GM23248 (cell line): ENCODE measurements at regions of chr20 and their contacts with region 1.

Region 1: GRCh38 chr20:62025832-62026563 is 39.7 kb downstream of the TAF4 start:
- DNase-seq: peak; percentile 90
- H3K4me3 ChIP-seq: peak overlapping the region; percentile 20
- H3K27ac ChIP-seq: peak overlapping the region; percentile 9; the same call in 1 of the 2 replicates
- H3K4me1 ChIP-seq: peaks cover 15% of the 10 kb centered on the region
- H3K27me3 ChIP-seq: no peaks in the 10 kb centered on the region

Region 2: GRCh38 chr20:61765871-61766654 is 259.9 kb before region 1 on chr20:
- in situ Hi-C with region 1: no loop called
- DNase-seq: no peak
- H3K4me3 ChIP-seq: no peak overlapping the region
- H3K27ac ChIP-seq: no peak overlapping the region
- H3K4me1 ChIP-seq: no peaks in the 10 kb centered on the region
- H3K27me3 ChIP-seq: no peaks in the 10 kb centered on the region

Region 3: GRCh38 chr20:62136283-62137091 is 110.5 kb after region 1 on chr20:
- in situ Hi-C with region 1: loop called (anchors 10 kb)
- DNase-seq: peak; percentile 81
- H3K4me3 ChIP-seq: no peak overlapping the region
- H3K27ac ChIP-seq: no peak overlapping the region
- H3K4me1 ChIP-seq: peaks cover 10% of the 10 kb centered on the region; the same call in 1 of the 2 replicates
- H3K27me3 ChIP-seq: no peaks in the 10 kb centered on the region

Region 4: DNA sequence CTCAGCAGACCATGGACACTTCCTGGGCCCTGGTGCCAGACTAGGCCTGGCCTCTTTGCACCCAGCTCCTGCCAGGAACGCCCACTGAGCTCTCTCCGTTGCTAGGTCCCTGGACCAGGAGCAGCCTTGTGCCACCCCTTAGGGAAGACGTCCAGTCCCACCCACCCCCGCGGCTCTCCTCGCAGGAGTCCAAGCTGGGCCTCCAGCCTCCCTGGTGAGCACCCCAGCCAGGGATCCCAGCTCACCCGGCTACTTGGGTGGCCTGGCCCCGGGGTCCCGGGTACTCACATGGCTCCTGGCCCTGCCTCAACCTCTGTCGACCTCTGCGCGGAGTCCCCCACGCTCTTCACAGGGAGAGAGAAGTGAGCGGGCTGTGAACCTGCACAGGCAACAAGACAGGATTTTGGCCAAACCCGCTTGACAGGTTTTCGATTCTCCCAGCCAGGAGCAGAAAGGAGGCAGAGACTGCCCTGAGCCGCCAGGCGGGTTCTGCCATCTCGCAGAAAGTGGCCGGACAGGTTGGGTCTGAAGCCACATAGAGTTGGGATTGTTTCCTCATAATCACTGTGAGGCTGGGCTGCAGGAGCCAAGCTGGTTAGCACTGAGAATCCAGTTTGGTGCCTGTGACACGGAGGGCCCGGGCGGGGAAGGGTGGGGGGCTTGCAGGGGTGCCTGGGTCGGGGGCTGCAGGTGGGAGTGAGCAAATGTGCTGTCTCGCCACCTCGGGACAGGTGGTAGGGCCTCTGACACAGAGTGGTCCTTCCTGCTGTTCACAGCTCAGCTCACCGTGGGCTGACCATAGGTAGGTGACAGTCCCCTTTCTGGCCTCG is 401.4 kb after region 1 on chr20 and contains the start of gene RBBP8NL:
- in situ Hi-C with region 1: no loop called
- DNase-seq: no peak
- H3K4me3 ChIP-seq: no peak within 1 kb of the TSS
- H3K27ac ChIP-seq: no peak within 1 kb of the TSS
- H3K4me1 ChIP-seq: no peaks in the 10 kb centered on the region
- H3K27me3 ChIP-seq: peaks cover 12% of the 10 kb centered on the region
- total RNA-seq, gene RBBP8NL: not detected in 2 replicates